ENCODE measurements at regions of chr6 and their contacts with region 1.

Region 1: GRCh38 chr6:129490521-129491245 is 219.3 kb downstream of the ARHGAP18 start:
- DNase-seq: peak; percentile 78
- H3K4me3 Mint-ChIP-seq: peak overlapping the region; percentile 61
- H3K27ac Mint-ChIP-seq: peak overlapping the region; percentile 98
- H3K4me1 Mint-ChIP-seq: peaks cover 61% of the 10 kb centered on the region
- H3K27me3 Mint-ChIP-seq: no peaks in the 10 kb centered on the region

Region 2: GRCh38 chr6:127900935-127901334 is 1589.7 kb before region 1 on chr6 and contains the start of gene THEMIS:
- CTCF ChIA-PET with region 1: no interaction called
- POLR2A ChIA-PET with region 1: no interaction called
- intact Hi-C with region 1: loop called (anchors 5 kb)
- DNase-seq: peak; percentile 50
- H3K4me3 Mint-ChIP-seq: peak within 1 kb of the TSS; percentile 89
- H3K27ac Mint-ChIP-seq: peak within 1 kb of the TSS; percentile 93
- H3K4me1 Mint-ChIP-seq: peaks cover 64% of the 10 kb centered on the region
- H3K27me3 Mint-ChIP-seq: no peaks in the 10 kb centered on the region
- total RNA-seq, gene THEMIS: 9.5 to 11.5 TPM

Region 3: GRCh38 chr6:129280749-129281148 is 209.9 kb before region 1 on chr6:
- CTCF ChIA-PET with region 1: no interaction called
- POLR2A ChIA-PET with region 1: no interaction called
- intact Hi-C with region 1: loop called (anchors 5 kb)
- DNase-seq: peak; percentile 66
- H3K4me3 Mint-ChIP-seq: peak overlapping the region; percentile 30
- H3K27ac Mint-ChIP-seq: peak overlapping the region; percentile 18
- H3K4me1 Mint-ChIP-seq: peaks cover 27% of the 10 kb centered on the region
- H3K27me3 Mint-ChIP-seq: peaks cover 2% of the 10 kb centered on the region

Region 4: GRCh38 chr6:129672881-129673643 is 182.4 kb after region 1 on chr6:
- CTCF ChIA-PET with region 1: no interaction called
- POLR2A ChIA-PET with region 1: no interaction called
- intact Hi-C with region 1: loop called (anchors 1 kb)
- DNase-seq: no peak
- H3K4me3 Mint-ChIP-seq: peak overlapping the region; percentile 67
- H3K27ac Mint-ChIP-seq: peak overlapping the region; percentile 95
- H3K4me1 Mint-ChIP-seq: peaks cover 36% of the 10 kb centered on the region
- H3K27me3 Mint-ChIP-seq: no peaks in the 10 kb centered on the region

Region 5: DNA sequence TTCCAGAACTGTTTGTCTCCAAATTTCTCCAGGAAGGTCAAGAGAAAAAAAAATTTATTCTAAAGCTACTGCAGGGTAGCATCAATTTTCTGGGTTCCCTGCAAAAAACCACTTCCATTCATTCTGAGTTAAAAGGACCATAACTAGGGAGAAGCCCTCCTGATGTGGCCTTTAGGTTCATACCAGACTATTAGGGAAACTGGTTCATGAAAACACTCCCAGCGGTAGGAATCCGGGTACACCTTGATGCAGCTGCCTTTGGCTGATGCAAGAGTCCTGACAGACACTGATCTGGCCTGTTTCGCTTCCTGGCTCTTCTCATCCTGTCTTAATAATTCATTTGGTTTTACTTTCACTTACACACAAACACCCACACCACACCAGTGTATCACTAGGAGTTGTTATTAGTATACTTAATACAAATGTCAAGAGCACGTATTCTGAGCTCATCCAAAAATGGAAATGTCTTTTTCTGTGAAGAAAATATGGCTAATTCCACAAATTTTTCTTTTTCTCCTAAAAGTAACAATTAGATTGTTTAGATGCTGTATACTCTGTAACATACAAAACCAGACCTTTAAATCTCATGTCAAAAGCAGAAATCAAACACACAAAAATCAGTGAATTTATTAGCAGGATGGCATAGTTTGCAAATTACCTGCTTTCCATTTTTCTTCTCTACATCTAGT is 257.7 kb after region 1 on chr6:
- CTCF ChIA-PET with region 1: interaction called, 3 read pairs
- POLR2A ChIA-PET with region 1: no interaction called
- intact Hi-C with region 1: loop called (anchors 1 kb)
- DNase-seq: peak; percentile 70
- H3K4me3 Mint-ChIP-seq: peak overlapping the region; percentile 63
- H3K27ac Mint-ChIP-seq: peak overlapping the region; percentile 91
- H3K4me1 Mint-ChIP-seq: peaks cover 60% of the 10 kb centered on the region
- H3K27me3 Mint-ChIP-seq: no peaks in the 10 kb centered on the region

Region 6: GRCh38 chr6:129860908-129861665 is 370.4 kb after region 1 on chr6 and contains the start of gene TMEM244:
- CTCF ChIA-PET with region 1: no interaction called
- POLR2A ChIA-PET with region 1: no interaction called
- intact Hi-C with region 1: loop called (anchors 1 kb)
- DNase-seq: peak; percentile 26
- H3K4me3 Mint-ChIP-seq: peak within 1 kb of the TSS; percentile 41
- H3K27ac Mint-ChIP-seq: peak within 1 kb of the TSS; percentile 19
- H3K4me1 Mint-ChIP-seq: peaks cover 14% of the 10 kb centered on the region
- H3K27me3 Mint-ChIP-seq: no peaks in the 10 kb centered on the region
- total RNA-seq, gene TMEM244: not detected

Region 7: GRCh38 chr6:130027948-130028347 is 537.3 kb after region 1 on chr6:
- CTCF ChIA-PET with region 1: no interaction called
- POLR2A ChIA-PET with region 1: no interaction called
- intact Hi-C with region 1: loop called (anchors 2 kb)
- DNase-seq: no peak
- H3K4me3 Mint-ChIP-seq: no peak overlapping the region
- H3K27ac Mint-ChIP-seq: peak overlapping the region; percentile 70
- H3K4me1 Mint-ChIP-seq: peaks cover 53% of the 10 kb centered on the region
- H3K27me3 Mint-ChIP-seq: no peaks in the 10 kb centered on the region